Transverse colon (tissue), 4 donors: ENCODE measurements at regions of chr9 and their contacts with region 1.

Region 1: DNA sequence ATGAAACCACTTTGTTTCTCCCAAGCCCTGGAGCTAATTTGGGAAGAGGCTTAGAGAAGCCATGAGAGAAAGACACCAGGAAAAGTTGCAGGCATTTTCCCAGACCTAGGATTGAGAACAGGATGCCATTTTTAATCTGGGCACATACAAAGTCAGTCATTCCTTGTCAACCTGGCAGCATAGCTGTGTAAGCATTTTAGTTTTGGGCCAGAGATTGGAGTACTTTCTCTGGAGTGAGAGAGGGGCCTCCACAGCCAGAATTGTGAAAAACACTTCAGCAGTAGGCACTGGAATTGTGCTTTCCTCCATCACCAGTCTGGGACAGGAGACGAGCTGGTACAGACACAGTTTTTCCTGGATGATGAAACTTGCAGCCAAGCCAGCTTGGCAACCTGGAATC is 390.3 kb upstream of the DMAC1 start:
- DNase-seq: no peak
- H3K4me3 ChIP-seq: no peak overlapping the region
- H3K27ac ChIP-seq: no peak overlapping the region
- H3K4me1 ChIP-seq: no peaks in the 10 kb centered on the region
- H3K27me3 ChIP-seq: no peaks in the 10 kb centered on the region
- CTCF ChIP-seq: no peak
- EP300 ChIP-seq: no peak
- POLR2A ChIP-seq: no peak

Region 2: GRCh38 chr9:6873857-6874256 is 1316.0 kb before region 1 on chr9:
- in situ Hi-C with region 1: no loop called
- intact Hi-C with region 1: no loop called
- DNase-seq: no peak
- H3K4me3 ChIP-seq: no peak overlapping the region
- H3K27ac ChIP-seq: no peak overlapping the region
- H3K4me1 ChIP-seq: no peaks in the 10 kb centered on the region
- H3K27me3 ChIP-seq: no peaks in the 10 kb centered on the region
- CTCF ChIP-seq: no peak
- EP300 ChIP-seq: no peak
- POLR2A ChIP-seq: no peak

Region 3: GRCh38 chr9:9817176-9817575 is 1627.3 kb after region 1 on chr9:
- in situ Hi-C with region 1: no loop called
- intact Hi-C with region 1: loop called (anchors 5 kb)
- DNase-seq: no peak
- H3K4me3 ChIP-seq: no peak overlapping the region
- H3K27ac ChIP-seq: no peak overlapping the region
- H3K4me1 ChIP-seq: no peaks in the 10 kb centered on the region
- H3K27me3 ChIP-seq: no peaks in the 10 kb centered on the region
- CTCF ChIP-seq: no peak
- EP300 ChIP-seq: no peak
- POLR2A ChIP-seq: no peak